Activated CD4-positive, alpha-beta T cell treated with anti-CD3 and anti-CD28 coated beads for 36 hours (primary cell): ENCODE measurements at regions of chr17 and their contacts with region 1.

Region 1: GRCh38 chr17:74528491-74529199 is 2.6 kb downstream of the CD300LB start:
- DNase-seq: no peak
- ATAC-seq: peak; percentile 44
- H3K4me3 Mint-ChIP-seq: no peak overlapping the region
- H3K27ac Mint-ChIP-seq: no peak overlapping the region
- H3K4me1 Mint-ChIP-seq: peaks cover 2% of the 10 kb centered on the region
- H3K27me3 Mint-ChIP-seq: peaks cover 7% of the 10 kb centered on the region

Region 2: GRCh38 chr17:74379495-74380085 is 149.1 kb before region 1 on chr17:
- CTCF ChIA-PET with region 1: interaction called, 15 read pairs
- POLR2A ChIA-PET with region 1: no interaction called
- intact Hi-C with region 1: loop called in 1 of 2 experiments (anchors 1 kb)
- DNase-seq: peak; percentile 97
- ATAC-seq: peak; percentile 97
- H3K4me3 Mint-ChIP-seq: no peak overlapping the region
- H3K27ac Mint-ChIP-seq: no peak overlapping the region
- H3K4me1 Mint-ChIP-seq: no peaks in the 10 kb centered on the region
- H3K27me3 Mint-ChIP-seq: no peaks in the 10 kb centered on the region